Natural killer cell (primary cell): ENCODE measurements at regions of chr1 and their contacts with region 1.

Region 1: GRCh38 chr1:151739590-151740375 is 18.5 kb downstream of the RIIAD1 start:
- DNase-seq: no peak
- ATAC-seq: no peak
- H3K4me3 ChIP-seq: no peak overlapping the region
- H3K4me3 Mint-ChIP-seq: no peak overlapping the region
- H3K27ac ChIP-seq: no peak overlapping the region
- H3K27ac Mint-ChIP-seq: no peak overlapping the region
- H3K4me1 ChIP-seq: no peaks in the 10 kb centered on the region
- H3K4me1 Mint-ChIP-seq: no peaks in the 10 kb centered on the region
- H3K27me3 ChIP-seq: no peaks in the 10 kb centered on the region
- H3K27me3 Mint-ChIP-seq: peaks cover 4 to 12% of the 10 kb centered on the region in 2 donors
- CTCF ChIP-seq: no peak

Region 2: DNA sequence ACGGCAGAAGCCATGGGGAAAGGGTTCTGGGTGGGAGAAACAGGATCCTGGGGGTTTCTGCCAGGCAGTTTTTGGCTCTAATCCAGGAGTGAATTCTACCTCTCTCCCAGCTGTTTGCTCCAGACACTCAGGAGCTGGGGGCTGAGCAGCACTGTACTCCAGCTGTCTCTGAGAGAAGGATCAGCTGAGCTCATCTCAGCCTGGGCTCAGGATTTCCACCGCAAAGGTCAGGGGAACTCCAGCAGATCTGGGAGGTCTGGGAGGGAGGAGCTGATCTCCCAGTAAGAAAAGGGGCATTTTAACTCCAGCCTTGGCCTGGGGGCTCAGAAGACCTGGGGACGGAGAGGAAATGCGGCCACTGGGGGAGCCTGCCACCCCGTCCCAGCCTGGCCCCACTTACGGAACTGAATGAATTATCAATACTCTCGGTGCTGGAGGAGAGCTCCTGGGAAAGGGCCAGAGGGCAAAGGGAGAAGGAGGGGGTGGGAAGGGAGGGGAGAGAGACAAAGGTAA is 429.9 kb before region 1 on chr1:
- intact Hi-C with region 1: loop called (anchors 10 kb)
- DNase-seq: no peak
- ATAC-seq: no peak
- H3K4me3 ChIP-seq: no peak overlapping the region
- H3K4me3 Mint-ChIP-seq: no peak overlapping the region
- H3K27ac ChIP-seq: no peak overlapping the region
- H3K27ac Mint-ChIP-seq: peak overlapping the region in 1 of 2 donors; percentile 58
- H3K4me1 ChIP-seq: no peaks in the 10 kb centered on the region
- H3K4me1 Mint-ChIP-seq: peaks cover 31 to 36% of the 10 kb centered on the region in 2 donors
- H3K27me3 ChIP-seq: no peaks in the 10 kb centered on the region
- H3K27me3 Mint-ChIP-seq: no peaks in the 10 kb centered on the region
- CTCF ChIP-seq: no peak

Region 3: DNA sequence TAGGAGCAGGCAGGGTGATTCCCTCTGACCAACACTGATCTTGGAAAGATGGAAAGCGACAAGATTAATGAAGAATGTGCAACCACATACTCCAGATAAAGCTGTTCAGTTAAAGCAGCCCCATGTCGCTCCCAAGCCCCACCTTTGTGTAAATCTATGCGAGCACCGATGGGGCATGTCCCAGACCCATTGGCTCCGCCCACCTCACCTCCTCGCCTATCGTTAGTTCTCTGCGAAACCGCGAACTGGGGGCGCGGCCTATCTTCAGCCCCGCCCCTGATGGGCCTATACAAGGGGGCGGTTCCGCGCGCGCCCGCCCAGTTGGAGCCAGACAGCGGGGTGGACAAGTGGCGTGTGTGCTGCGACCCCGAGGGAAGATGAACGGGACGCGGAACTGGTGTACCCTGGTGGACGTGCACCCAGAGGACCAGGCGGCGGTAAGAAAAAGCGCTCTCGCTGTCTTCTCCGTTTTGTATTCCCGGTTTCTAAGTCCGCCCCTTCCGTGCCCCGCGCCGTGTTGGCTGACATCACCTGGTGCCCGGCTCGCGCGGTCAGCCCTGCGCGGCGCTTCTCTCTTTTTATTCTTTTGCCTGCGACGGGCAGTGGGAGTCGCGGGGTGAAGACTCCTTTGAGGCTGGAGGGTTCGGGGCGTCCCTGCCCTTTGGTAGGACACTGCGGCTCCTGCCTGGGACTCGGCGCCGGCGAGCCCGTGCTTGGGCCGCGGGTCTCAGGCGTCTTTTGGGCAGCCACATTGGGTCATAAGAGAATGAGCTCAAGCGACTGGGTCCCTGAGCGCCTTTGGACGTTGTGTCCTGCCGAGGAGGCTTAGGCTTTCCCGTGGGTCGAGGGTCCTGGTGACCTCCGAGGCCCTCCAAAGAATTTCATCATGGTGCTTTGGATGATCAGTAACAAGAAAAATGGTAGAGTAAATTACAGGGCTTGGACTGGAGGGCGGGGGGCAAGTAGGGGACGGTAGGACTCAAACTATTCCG is 199.5 kb before region 1 on chr1 and contains the start of gene TUFT1:
- intact Hi-C with region 1: loop called (anchors 10 kb)
- DNase-seq: peak; percentile 92 to 97
- ATAC-seq: peak; percentile 98 to 99 (median 99)
- H3K4me3 ChIP-seq: peak within 1 kb of the TSS; percentile 73
- H3K4me3 Mint-ChIP-seq: peak within 1 kb of the TSS; percentile 99
- H3K27ac ChIP-seq: peak within 1 kb of the TSS; percentile 32
- H3K27ac Mint-ChIP-seq: peak within 1 kb of the TSS; percentile 88 to 91
- H3K4me1 ChIP-seq: peaks cover 21% of the 10 kb centered on the region
- H3K4me1 Mint-ChIP-seq: peaks cover 19 to 24% of the 10 kb centered on the region in 2 donors
- H3K27me3 ChIP-seq: peaks cover 4% of the 10 kb centered on the region
- H3K27me3 Mint-ChIP-seq: peaks cover 25% of the 10 kb centered on the region in 2 donors
- CTCF ChIP-seq: no peak
- total RNA-seq, gene TUFT1: 4.6 to 7.2 (median 5.0) TPM

Region 4: DNA sequence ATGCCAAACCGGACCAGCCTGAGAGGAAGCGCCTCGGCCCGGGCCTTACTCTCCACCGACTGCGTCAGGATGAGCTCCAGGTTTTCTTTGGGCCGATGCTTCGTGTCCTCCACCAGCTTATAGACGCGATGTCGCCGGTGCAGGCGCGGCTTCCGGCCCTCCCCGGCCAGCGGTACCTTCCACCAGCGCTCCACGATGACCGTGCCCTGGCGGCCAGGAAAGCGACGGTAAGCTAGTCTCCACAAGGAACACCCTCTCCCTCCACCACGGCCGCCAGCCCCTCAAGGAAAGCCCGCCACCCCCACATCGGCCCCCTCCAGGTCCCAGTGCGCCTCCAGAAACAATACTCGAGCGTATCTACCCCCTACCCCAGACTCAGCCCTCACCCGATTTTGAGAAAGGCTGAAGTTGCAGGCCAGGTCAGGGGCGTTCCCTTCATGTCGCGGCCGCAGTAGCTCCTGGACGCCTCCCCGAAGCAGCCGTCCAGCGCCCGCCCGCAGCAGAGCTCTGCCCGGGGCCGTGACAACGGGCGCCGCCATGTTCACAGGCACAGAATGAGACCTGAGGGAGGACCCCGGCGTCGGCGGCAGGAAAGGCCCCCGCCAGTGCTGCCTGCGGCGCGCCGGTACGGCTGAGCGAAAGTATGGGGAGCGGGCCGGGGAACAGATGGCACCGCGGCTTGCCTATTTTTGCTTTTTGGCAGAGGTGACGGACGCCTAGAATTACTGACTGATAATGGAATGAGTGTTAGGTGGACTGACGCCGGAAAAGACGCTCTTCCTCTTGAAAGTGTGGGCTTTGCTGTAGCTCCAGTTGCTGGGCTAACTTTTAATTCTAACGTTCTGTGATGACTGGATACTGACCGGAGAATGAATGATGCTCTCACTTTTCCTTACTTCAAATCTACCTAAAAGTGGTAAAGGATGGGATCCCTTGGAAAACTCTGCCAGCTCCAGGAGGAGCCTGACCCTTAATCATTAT is 23.4 kb after region 1 on chr1 and contains the start of gene MRPL9:
- intact Hi-C with region 1: loop called (anchors 2 kb)
- DNase-seq: peak; percentile 84 to 88
- ATAC-seq: peak; percentile 97 to 99 (median 98)
- H3K4me3 ChIP-seq: peak within 1 kb of the TSS; percentile 76
- H3K4me3 Mint-ChIP-seq: peak within 1 kb of the TSS; percentile 98
- H3K27ac ChIP-seq: peak within 1 kb of the TSS; percentile 91
- H3K27ac Mint-ChIP-seq: peak within 1 kb of the TSS; percentile 96 to 99
- H3K4me1 ChIP-seq: peaks cover 11% of the 10 kb centered on the region
- H3K4me1 Mint-ChIP-seq: peaks cover 22 to 23% of the 10 kb centered on the region in 2 donors
- H3K27me3 ChIP-seq: no peaks in the 10 kb centered on the region
- H3K27me3 Mint-ChIP-seq: no peaks in the 10 kb centered on the region
- CTCF ChIP-seq: no peak
- total RNA-seq, gene MRPL9: 93.6 to 110 (median 107) TPM